T-cell (primary cell): ENCODE measurements at regions of chr19 and their contacts with region 1.

Region 1: GRCh38 chr19:38374429-38375176 is at the start of gene PSMD8:
- DNase-seq: peak; percentile 94 to 100 (median 99)
- ATAC-seq: peak; percentile 95 to 97 (median 97)
- H3K4me3 ChIP-seq: peak within 1 kb of the TSS; percentile 74 to 92
- H3K4me3 Mint-ChIP-seq: peak within 1 kb of the TSS; percentile 98 to 100 (median 99)
- H3K27ac ChIP-seq: peak within 1 kb of the TSS; percentile 79
- H3K27ac Mint-ChIP-seq: peak within 1 kb of the TSS; percentile 97 to 98
- H3K4me1 ChIP-seq: peaks cover 15 to 37% of the 10 kb centered on the region in 2 experiments
- H3K4me1 Mint-ChIP-seq: peaks cover 30 to 35% (median 31%) of the 10 kb centered on the region in 3 donors
- H3K27me3 ChIP-seq: peaks cover 0 to 13% of the 10 kb centered on the region in 2 experiments
- H3K27me3 Mint-ChIP-seq: peaks cover 0 to 11% of the 10 kb centered on the region in 2 donors
- total RNA-seq, gene PSMD8: 76.4 to 95.2 (median 85.8) TPM

Region 2: DNA sequence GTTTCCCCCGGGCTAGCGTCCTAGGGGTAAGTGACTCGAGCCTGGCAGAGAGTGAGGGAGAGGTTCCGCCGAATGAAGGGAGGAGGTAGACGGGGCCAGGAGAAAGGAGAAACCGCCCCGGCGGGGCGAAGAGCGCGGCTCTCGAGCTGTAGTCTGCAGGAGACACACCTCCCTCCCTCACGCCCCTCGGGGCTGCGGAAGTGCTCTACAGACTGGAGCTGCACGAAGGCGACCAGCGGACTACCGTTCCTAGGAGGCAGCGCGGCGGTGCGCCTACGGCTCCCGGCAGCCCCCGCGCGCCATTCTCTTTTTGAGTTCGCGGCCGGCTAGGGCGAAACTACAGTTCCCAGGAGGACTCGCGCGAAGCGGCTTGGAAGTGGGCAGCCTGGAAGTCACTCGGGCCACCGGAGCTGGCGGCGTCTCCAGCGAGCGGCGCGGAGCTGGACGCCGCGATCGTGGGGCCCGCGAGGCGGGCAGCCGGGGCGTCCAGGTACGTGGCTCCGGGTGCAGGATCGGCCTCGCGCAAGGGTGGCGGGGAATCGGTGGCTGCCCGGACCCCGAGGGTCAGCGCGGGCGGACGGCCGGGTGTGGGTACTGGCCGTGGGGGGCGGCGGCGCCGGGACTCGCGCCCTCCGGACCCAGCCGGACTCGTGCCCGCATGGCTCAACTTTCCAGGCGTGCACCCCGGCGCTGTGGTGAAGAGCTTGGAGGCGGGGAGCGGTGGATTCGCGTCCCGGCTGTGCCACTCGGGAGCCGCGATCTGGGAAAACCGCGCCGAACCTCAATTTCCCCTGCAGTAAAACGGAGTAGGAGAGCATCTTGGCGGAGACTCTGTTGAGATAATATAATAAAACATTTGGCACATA is 467.5 kb before region 1 on chr19 and contains the start of gene SIPA1L3:
- CTCF ChIA-PET with region 1: interaction called in 1 of 2 experiments, 11 read pairs
- POLR2A ChIA-PET with region 1: no interaction called
- DNase-seq: peak; percentile 83 to 96 (median 90)
- ATAC-seq: peak; percentile 97 to 99 (median 98)
- H3K4me3 ChIP-seq: peak within 1 kb of the TSS; percentile 80 to 91
- H3K4me3 Mint-ChIP-seq: peak within 1 kb of the TSS; percentile 77 to 92 (median 91)
- H3K27ac ChIP-seq: peak within 1 kb of the TSS; percentile 59
- H3K27ac Mint-ChIP-seq: peak within 1 kb of the TSS; percentile 85 to 90
- H3K4me1 ChIP-seq: peaks cover 7 to 23% of the 10 kb centered on the region in 2 experiments
- H3K4me1 Mint-ChIP-seq: peaks cover 32 to 38% (median 33%) of the 10 kb centered on the region in 3 donors
- H3K27me3 ChIP-seq: no peaks in the 10 kb centered on the region
- H3K27me3 Mint-ChIP-seq: no peaks in the 10 kb centered on the region
- total RNA-seq, gene SIPA1L3: 26.2 to 40.6 (median 35.5) TPM

Region 3: DNA sequence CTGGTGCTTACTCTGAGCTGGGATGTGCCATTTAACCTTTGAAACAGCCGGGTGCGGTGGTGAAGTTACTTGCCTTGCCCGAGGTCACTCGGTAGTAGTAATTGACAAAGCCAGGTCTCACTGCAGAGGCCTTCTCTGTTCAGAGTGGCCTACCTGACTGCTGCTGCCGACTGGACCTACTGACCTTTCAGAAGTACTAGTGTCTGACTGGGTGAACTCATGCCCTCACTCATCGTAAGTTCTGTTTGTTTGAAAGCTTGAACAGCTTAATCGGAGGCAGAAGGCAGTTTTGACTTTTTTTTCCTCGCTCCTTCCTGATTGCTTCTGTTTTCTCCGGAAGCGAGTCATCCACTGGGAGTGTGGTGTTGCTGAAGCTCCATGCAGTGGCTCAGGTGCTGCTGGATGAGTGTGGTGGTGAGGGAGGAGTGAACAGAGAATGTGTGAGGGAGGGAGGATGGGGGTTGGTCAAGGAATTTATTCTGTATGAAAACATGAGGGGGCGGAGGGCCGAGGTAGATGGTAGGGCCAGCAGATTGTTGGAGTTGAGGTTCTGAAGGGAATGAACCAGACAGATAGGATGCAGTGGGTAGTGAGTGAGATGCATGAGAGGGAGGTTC is 107.5 kb before region 1 on chr19:
- CTCF ChIA-PET with region 1: no interaction called
- POLR2A ChIA-PET with region 1: no interaction called
- DNase-seq: no peak
- ATAC-seq: no peak
- H3K4me3 ChIP-seq: no peak overlapping the region
- H3K4me3 Mint-ChIP-seq: no peak overlapping the region
- H3K27ac ChIP-seq: no peak overlapping the region
- H3K27ac Mint-ChIP-seq: peak overlapping the region in 1 of 2 donors; percentile 1
- H3K4me1 ChIP-seq: peaks cover 3 to 22% of the 10 kb centered on the region in 2 experiments
- H3K4me1 Mint-ChIP-seq: peaks cover 32 to 40% (median 35%) of the 10 kb centered on the region in 3 donors
- H3K27me3 ChIP-seq: peaks cover 0 to 9% of the 10 kb centered on the region in 2 experiments
- H3K27me3 Mint-ChIP-seq: peaks cover 0 to 4% of the 10 kb centered on the region in 2 donors

Region 4: DNA sequence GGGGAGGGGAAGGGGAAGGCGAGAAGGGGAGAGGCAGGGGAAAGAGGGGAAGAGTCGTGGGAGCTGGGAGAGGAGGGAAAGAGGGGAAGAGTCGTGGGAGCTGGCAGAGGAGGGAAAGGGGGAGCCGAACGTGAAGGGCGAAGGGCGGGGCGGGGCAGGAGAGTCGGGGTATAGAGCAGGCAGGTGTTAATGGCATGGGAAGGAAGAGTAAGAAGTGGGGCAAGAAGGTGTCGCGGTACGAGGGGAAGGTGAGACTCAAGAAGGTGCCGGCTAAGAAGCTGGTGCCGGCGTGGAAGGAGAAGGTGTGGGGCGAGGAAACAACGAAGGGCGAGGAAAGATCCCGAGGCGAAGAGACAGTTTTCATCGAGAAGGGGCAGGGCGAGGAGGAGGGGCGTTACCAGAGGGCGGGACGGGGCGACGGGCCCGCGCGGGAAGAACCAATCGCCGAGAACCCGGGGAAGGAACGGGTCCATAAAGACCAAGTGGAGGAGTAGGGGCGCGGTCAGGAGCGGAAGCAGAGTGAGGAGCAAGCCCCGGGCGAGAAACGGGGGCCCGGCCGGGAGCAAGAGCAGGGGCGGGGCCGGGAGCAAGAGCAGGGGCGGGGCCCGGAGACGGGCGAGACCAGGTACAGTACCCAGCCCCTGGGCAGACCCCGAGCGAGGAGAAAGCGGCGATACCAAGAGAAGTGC is 38.5 kb before region 1 on chr19:
- CTCF ChIA-PET with region 1: interaction called in 1 of 2 experiments, 28 read pairs
- POLR2A ChIA-PET with region 1: interaction called in 1 of 2 experiments, 5 read pairs
- DNase-seq: peak; percentile 87 to 96 (median 93)
- ATAC-seq: peak; percentile 74 to 77 (median 76)
- H3K4me3 ChIP-seq: peak overlapping the region; percentile 77 to 80
- H3K4me3 Mint-ChIP-seq: peak overlapping the region; percentile 88 to 93 (median 90)
- H3K27ac ChIP-seq: peak overlapping the region; percentile 96
- H3K27ac Mint-ChIP-seq: peak overlapping the region; percentile 93 to 98
- H3K4me1 ChIP-seq: peaks cover 4 to 19% of the 10 kb centered on the region in 2 experiments
- H3K4me1 Mint-ChIP-seq: peaks cover 13 to 17% (median 14%) of the 10 kb centered on the region in 3 donors
- H3K27me3 ChIP-seq: no peaks in the 10 kb centered on the region
- H3K27me3 Mint-ChIP-seq: no peaks in the 10 kb centered on the region

Region 5: GRCh38 chr19:38387550-38388348 is 13.1 kb after region 1 on chr19 and contains the start of gene GGN:
- CTCF ChIA-PET with region 1: interaction called, 3 to 15 read pairs
- POLR2A ChIA-PET with region 1: interaction called, 6 to 7 read pairs
- DNase-seq: peak; percentile 57 to 83 (median 73)
- ATAC-seq: peak; percentile 74 to 79 (median 76)
- H3K4me3 ChIP-seq: peak within 1 kb of the TSS; percentile 40 to 54
- H3K4me3 Mint-ChIP-seq: peak within 1 kb of the TSS; percentile 83 to 91 (median 89)
- H3K27ac ChIP-seq: no peak within 1 kb of the TSS
- H3K27ac Mint-ChIP-seq: peak within 1 kb of the TSS; percentile 62 to 76
- H3K4me1 ChIP-seq: peaks cover 2 to 43% of the 10 kb centered on the region in 2 experiments
- H3K4me1 Mint-ChIP-seq: peaks cover 13 to 31% (median 30%) of the 10 kb centered on the region in 3 donors
- H3K27me3 ChIP-seq: peaks cover 0 to 53% of the 10 kb centered on the region in 2 experiments
- H3K27me3 Mint-ChIP-seq: peaks cover 9 to 13% of the 10 kb centered on the region in 2 donors
- total RNA-seq, gene GGN: 0.18 to 0.60 (median 0.31) TPM in 4 of 5 donors, not detected in the other